Naive thymus-derived CD4-positive, alpha-beta T cell (primary cell): ENCODE measurements at regions of chr14 and their contacts with region 1.

Region 1: DNA sequence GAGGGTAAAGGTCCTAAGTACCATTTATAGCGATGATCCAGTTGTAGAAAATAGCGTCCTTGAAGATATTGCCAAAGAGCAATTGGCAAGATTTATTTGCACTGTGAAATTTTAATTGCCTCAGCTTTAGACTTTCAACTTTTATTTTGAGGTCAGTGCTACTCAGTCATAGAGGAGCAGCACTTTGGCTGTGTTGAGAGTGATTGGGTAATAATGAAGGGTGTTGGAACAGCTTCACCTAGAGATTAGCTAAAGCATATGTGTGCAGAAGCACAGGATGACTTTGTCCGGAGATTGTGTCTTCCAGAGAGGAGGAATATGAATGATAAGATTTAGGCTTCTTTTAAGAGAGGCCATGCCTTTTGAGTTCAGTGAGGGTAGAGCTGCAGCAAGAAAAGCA is 164.8 kb downstream of the NPAS3 start:
- DNase-seq: no peak
- ATAC-seq: no peak
- H3K4me3 ChIP-seq: no peak overlapping the region
- H3K4me3 Mint-ChIP-seq: no peak overlapping the region
- H3K27ac ChIP-seq: no peak overlapping the region
- H3K27ac Mint-ChIP-seq: no peak overlapping the region
- H3K4me1 ChIP-seq: no peaks in the 10 kb centered on the region
- H3K4me1 Mint-ChIP-seq: no peaks in the 10 kb centered on the region
- H3K27me3 ChIP-seq: no peaks in the 10 kb centered on the region
- H3K27me3 Mint-ChIP-seq: peaks cover 0 to 4% (median 0%) of the 10 kb centered on the region in 5 donors

Region 2: DNA sequence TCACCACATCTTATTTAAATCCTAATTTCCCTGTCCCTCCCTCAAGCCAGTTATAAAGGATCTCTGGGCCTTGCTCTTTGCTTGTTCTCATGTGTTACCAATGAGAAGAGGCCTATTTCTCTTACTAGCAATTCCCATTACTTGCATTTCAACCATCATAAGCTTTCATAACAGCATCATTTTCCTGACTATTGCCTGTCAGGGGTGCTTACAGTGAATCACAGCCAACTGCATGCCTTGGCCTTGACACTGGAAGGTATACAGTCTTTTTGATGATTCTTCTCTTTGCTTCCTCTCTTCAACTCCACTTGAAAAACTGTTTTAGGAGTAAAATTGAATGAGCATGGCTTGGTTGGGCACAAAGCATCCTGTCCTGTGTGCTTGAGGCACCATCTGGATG is 37.9 kb before region 1 on chr14:
- CTCF ChIA-PET with region 1: no interaction called
- POLR2A ChIA-PET with region 1: no interaction called
- intact Hi-C with region 1: loop called in 1 of 2 experiments (anchors 1 kb)
- DNase-seq: no peak
- ATAC-seq: no peak
- H3K4me3 ChIP-seq: no peak overlapping the region
- H3K4me3 Mint-ChIP-seq: no peak overlapping the region
- H3K27ac ChIP-seq: no peak overlapping the region
- H3K27ac Mint-ChIP-seq: peak overlapping the region in 1 of 9 donors; percentile 21
- H3K4me1 ChIP-seq: no peaks in the 10 kb centered on the region
- H3K4me1 Mint-ChIP-seq: no peaks in the 10 kb centered on the region
- H3K27me3 ChIP-seq: no peaks in the 10 kb centered on the region
- H3K27me3 Mint-ChIP-seq: peaks cover 0 to 4% (median 0%) of the 10 kb centered on the region in 5 donors

Region 3: GRCh38 chr14:33085799-33086198 is 17.7 kb before region 1 on chr14:
- CTCF ChIA-PET with region 1: no interaction called
- POLR2A ChIA-PET with region 1: no interaction called
- intact Hi-C with region 1: no loop called
- DNase-seq: no peak
- ATAC-seq: no peak
- H3K4me3 ChIP-seq: no peak overlapping the region
- H3K4me3 Mint-ChIP-seq: no peak overlapping the region
- H3K27ac ChIP-seq: no peak overlapping the region
- H3K27ac Mint-ChIP-seq: no peak overlapping the region
- H3K4me1 ChIP-seq: no peaks in the 10 kb centered on the region
- H3K4me1 Mint-ChIP-seq: no peaks in the 10 kb centered on the region
- H3K27me3 ChIP-seq: no peaks in the 10 kb centered on the region
- H3K27me3 Mint-ChIP-seq: peaks cover 0 to 4% (median 0%) of the 10 kb centered on the region in 5 donors

Region 4: DNA sequence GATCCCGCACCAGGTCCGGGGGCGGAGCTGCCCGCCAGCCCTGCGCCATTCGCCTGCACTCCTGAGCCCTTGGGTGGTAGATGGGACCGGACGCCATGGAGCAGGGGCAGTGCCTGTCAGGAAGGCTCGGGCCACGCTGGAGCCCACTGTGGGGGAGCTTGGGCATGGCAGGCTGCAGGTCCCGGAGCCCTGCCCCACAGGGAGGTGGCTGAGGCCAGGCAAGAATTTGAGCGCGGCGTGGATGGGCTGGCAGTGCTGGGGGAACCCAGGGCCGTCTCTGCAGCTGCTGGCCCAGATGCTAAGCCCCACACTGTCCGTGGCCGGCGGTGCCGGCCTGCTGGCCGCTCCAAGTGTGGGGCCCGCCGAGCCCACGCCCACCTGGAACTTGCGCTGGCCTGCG is 95.2 kb after region 1 on chr14:
- CTCF ChIA-PET with region 1: no interaction called
- POLR2A ChIA-PET with region 1: no interaction called
- intact Hi-C with region 1: no loop called
- DNase-seq: no peak
- ATAC-seq: no peak
- H3K4me3 ChIP-seq: no peak overlapping the region
- H3K4me3 Mint-ChIP-seq: no peak overlapping the region
- H3K27ac ChIP-seq: no peak overlapping the region
- H3K27ac Mint-ChIP-seq: no peak overlapping the region
- H3K4me1 ChIP-seq: no peaks in the 10 kb centered on the region
- H3K4me1 Mint-ChIP-seq: no peaks in the 10 kb centered on the region
- H3K27me3 ChIP-seq: no peaks in the 10 kb centered on the region
- H3K27me3 Mint-ChIP-seq: no peaks in the 10 kb centered on the region